ENCODE measurements at regions of chr4 and their contacts with region 1.

Region 1: DNA sequence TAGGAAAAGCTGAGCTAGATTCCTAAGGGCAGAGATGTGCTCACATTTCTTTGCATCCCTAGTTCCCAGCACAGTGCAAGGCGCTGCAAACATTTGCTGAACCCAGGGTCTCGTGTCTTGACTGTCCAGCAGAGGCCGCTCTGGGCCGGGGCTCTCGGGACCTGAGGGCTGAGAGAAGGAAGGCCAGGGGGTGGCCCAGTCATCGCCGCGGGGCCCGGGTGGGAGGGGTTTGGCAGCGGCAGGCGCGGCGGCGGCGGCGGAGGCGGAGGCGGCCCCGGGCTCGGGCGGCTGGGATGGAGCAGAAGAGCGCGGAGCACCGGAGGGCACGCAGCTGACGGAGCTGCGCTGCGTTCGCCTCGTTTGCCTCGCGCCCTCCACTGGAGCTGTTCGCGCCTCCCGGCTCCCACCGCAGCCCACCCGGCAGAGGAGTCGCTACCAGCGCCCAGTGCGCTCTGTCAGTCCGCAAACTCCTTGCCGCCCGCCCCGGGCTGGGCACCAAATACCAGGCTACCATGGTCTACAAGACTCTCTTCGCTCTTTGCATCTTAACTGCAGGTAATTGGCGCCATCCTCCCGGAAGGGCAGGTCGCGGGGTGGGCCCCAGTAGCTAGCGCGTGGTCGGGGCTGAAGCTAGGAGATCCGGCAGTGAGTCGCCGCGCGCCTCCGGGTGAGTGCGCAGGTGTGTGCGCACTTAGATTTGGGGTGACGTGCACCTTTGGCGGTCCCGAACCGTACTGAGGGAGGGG is at the start of gene PARM1:
- DNase-seq: peak; percentile 90 to 95
- ATAC-seq: peak; percentile 97 to 99 (median 98)
- H3K4me3 ChIP-seq: peak within 1 kb of the TSS; percentile 84
- H3K27ac ChIP-seq: peak within 1 kb of the TSS; percentile 74
- H3K4me1 ChIP-seq: peaks cover 5% of the 10 kb centered on the region
- H3K27me3 ChIP-seq: no peaks in the 10 kb centered on the region
- CTCF ChIP-seq: peak; percentile 73
- total RNA-seq, gene PARM1: 5.2 to 14.5 (median 13.1) TPM

Region 2: GRCh38 chr4:74919783-74920182 is 13.2 kb before region 1 on chr4:
- intact Hi-C with region 1: no loop called
- DNase-seq: no peak
- ATAC-seq: no peak
- H3K4me3 ChIP-seq: no peak overlapping the region
- H3K27ac ChIP-seq: no peak overlapping the region
- H3K4me1 ChIP-seq: no peaks in the 10 kb centered on the region
- H3K27me3 ChIP-seq: no peaks in the 10 kb centered on the region
- CTCF ChIP-seq: no peak

Region 3: GRCh38 chr4:75011131-75011795 is 78.3 kb after region 1 on chr4:
- intact Hi-C with region 1: loop called in 1 of 2 experiments (anchors 5 kb)
- DNase-seq: no peak
- ATAC-seq: no peak
- H3K4me3 ChIP-seq: no peak overlapping the region
- H3K27ac ChIP-seq: no peak overlapping the region
- H3K4me1 ChIP-seq: peaks cover 20% of the 10 kb centered on the region
- H3K27me3 ChIP-seq: no peaks in the 10 kb centered on the region
- CTCF ChIP-seq: no peak

Region 4: GRCh38 chr4:75118739-75119138 is 185.8 kb after region 1 on chr4:
- intact Hi-C with region 1: loop called (anchors 1 to 2 kb)
- DNase-seq: no peak
- ATAC-seq: no peak
- H3K4me3 ChIP-seq: no peak overlapping the region
- H3K27ac ChIP-seq: no peak overlapping the region
- H3K4me1 ChIP-seq: no peaks in the 10 kb centered on the region
- H3K27me3 ChIP-seq: no peaks in the 10 kb centered on the region
- CTCF ChIP-seq: no peak

Region 5: GRCh38 chr4:75477201-75477600 is 544.2 kb after region 1 on chr4:
- intact Hi-C with region 1: loop called in 1 of 2 experiments (anchors 10 kb)
- DNase-seq: no peak
- ATAC-seq: no peak
- H3K4me3 ChIP-seq: no peak overlapping the region
- H3K27ac ChIP-seq: no peak overlapping the region
- H3K4me1 ChIP-seq: no peaks in the 10 kb centered on the region
- H3K27me3 ChIP-seq: no peaks in the 10 kb centered on the region
- CTCF ChIP-seq: no peak